CD4-positive, alpha-beta T cell (primary cell): ENCODE measurements at regions of chr13 and their contacts with region 1.

Region 1: GRCh38 chr13:114281351-114282040 is at the start of gene UPF3A:
- DNase-seq: peak; percentile 77 to 97 (median 86)
- ATAC-seq: peak; percentile 82
- H3K4me3 ChIP-seq: peak within 1 kb of the TSS; percentile 79
- H3K4me3 Mint-ChIP-seq: peak within 1 kb of the TSS; percentile 95
- H3K27ac ChIP-seq: peak within 1 kb of the TSS; percentile 72 to 89
- H3K27ac Mint-ChIP-seq: peak within 1 kb of the TSS; percentile 94
- H3K4me1 ChIP-seq: peaks cover 37% of the 10 kb centered on the region
- H3K4me1 Mint-ChIP-seq: peaks cover 61% of the 10 kb centered on the region
- H3K27me3 ChIP-seq: no peaks in the 10 kb centered on the region
- H3K27me3 Mint-ChIP-seq: no peaks in the 10 kb centered on the region
- CTCF ChIP-seq: no peak
- total RNA-seq, gene UPF3A: 31.8 TPM

Region 2: GRCh38 chr13:114234645-114235421 is 46.7 kb before region 1 on chr13 and contains the start of gene CDC16:
- CTCF ChIA-PET with region 1: no interaction called
- POLR2A ChIA-PET with region 1: interaction called, 3 read pairs
- intact Hi-C with region 1: loop called in 1 of 2 experiments (anchors 2 kb)
- DNase-seq: peak; percentile 63 to 90 (median 82)
- ATAC-seq: peak; percentile 82
- H3K4me3 ChIP-seq: peak within 1 kb of the TSS; percentile 87
- H3K4me3 Mint-ChIP-seq: peak within 1 kb of the TSS; percentile 92
- H3K27ac ChIP-seq: peak within 1 kb of the TSS in 1 of 2 donors; percentile 22
- H3K27ac Mint-ChIP-seq: peak within 1 kb of the TSS; percentile 85
- H3K4me1 ChIP-seq: peaks cover 20% of the 10 kb centered on the region
- H3K4me1 Mint-ChIP-seq: peaks cover 33% of the 10 kb centered on the region
- H3K27me3 ChIP-seq: no peaks in the 10 kb centered on the region
- H3K27me3 Mint-ChIP-seq: no peaks in the 10 kb centered on the region
- CTCF ChIP-seq: no peak
- total RNA-seq, gene CDC16: 68.4 to 69.4 TPM

Region 3: DNA sequence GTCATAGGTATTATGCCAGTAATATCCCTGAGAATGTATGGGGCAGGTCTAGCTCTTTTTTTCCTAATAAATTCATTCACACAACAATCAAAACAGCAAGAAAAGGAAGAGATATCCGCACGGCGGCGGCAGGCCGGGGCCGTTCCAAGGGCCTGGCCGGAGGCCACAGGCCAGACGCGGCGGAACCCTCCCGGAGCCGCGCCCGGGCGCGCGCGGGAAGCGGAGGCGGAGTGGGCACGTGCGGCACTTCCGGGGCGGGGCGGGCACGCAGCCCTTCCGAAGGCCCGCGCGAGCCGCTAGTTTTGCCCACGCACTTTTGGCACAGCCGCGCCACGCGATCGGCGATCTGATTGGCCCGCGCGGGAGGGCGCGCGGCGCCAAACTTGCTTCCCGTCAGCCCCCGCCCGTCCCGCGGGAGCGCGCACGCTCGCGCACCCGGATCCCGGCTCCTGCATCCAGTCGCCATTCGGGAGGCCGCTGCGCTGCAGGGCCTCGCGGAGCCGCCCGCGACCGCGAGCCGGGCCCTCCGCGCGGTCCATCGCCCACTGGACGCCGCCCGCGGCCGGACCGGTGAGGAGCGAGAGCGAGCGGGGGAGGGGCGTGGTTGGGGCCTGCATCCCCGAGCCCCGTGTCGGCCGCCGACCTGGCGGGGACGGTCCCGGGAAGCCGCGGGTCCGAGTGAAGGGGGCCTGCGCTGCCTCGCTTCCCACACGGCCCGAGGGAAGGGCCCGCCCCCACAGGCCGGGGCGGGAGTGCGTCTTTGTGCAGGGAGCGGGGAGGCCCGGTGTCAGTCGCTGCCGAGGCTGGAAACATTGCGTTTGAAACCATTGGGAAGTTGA is 32.8 kb after region 1 on chr13 and contains the start of gene CHAMP1:
- CTCF ChIA-PET with region 1: no interaction called
- POLR2A ChIA-PET with region 1: interaction called, 15 read pairs
- intact Hi-C with region 1: loop called (anchors 1 to 2 kb)
- DNase-seq: peak; percentile 77 to 96 (median 88)
- ATAC-seq: peak; percentile 85
- H3K4me3 ChIP-seq: peak within 1 kb of the TSS; percentile 55
- H3K4me3 Mint-ChIP-seq: peak within 1 kb of the TSS; percentile 91
- H3K27ac ChIP-seq: peak within 1 kb of the TSS; percentile 63 to 64
- H3K27ac Mint-ChIP-seq: peak within 1 kb of the TSS; percentile 84
- H3K4me1 ChIP-seq: peaks cover 32% of the 10 kb centered on the region
- H3K4me1 Mint-ChIP-seq: peaks cover 43% of the 10 kb centered on the region
- H3K27me3 ChIP-seq: no peaks in the 10 kb centered on the region
- H3K27me3 Mint-ChIP-seq: no peaks in the 10 kb centered on the region
- CTCF ChIP-seq: no peak
- total RNA-seq, gene CHAMP1: 11.0 to 12.2 TPM

Region 4: GRCh38 chr13:114334305-114335053 is 53.0 kb after region 1 on chr13:
- CTCF ChIA-PET with region 1: interaction called, 11 read pairs
- POLR2A ChIA-PET with region 1: no interaction called
- intact Hi-C with region 1: no loop called
- DNase-seq: peak in 1 of 14 experiments; percentile 31
- ATAC-seq: no peak
- H3K4me3 ChIP-seq: peak overlapping the region; percentile 33
- H3K4me3 Mint-ChIP-seq: no peak overlapping the region
- H3K27ac ChIP-seq: no peak overlapping the region
- H3K27ac Mint-ChIP-seq: no peak overlapping the region
- H3K4me1 ChIP-seq: peaks cover 12% of the 10 kb centered on the region
- H3K4me1 Mint-ChIP-seq: peaks cover 9% of the 10 kb centered on the region
- H3K27me3 ChIP-seq: no peaks in the 10 kb centered on the region
- H3K27me3 Mint-ChIP-seq: no peaks in the 10 kb centered on the region
- CTCF ChIP-seq: no peak